B cell (primary cell): ENCODE measurements at regions of chr1 and their contacts with region 1.

Region 1: DNA sequence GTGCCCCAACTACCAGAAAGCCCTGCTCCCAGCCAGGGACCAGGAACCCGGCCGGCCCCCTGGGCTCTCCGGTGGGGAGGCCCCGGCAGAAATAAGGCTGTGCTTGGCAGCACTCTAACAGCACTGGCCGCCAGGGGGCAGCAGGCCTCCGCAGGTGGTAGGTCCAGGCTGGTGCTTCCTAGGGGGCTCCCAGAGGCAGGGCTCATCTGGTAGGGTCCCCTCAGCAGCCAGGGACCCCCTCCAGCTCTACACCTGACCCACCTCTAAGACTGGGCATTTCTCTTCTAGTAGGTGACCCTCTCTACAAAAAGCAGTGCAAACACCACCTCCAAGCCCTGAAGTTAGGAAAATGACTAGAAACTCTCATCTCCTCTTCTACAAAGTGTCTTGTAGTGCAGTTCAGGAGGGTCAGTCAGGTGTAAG is 85.6 kb downstream of the STUM start:
- DNase-seq: peak; percentile 88
- ATAC-seq: peak; percentile 76
- H3K4me3 ChIP-seq: no peak overlapping the region
- H3K4me3 Mint-ChIP-seq: peak overlapping the region; percentile 2
- H3K27ac ChIP-seq: peak overlapping the region; percentile 70 to 77
- H3K27ac Mint-ChIP-seq: peak overlapping the region; percentile 43
- H3K4me1 ChIP-seq: peaks cover 37 to 61% of the 10 kb centered on the region in 2 donors
- H3K4me1 Mint-ChIP-seq: peaks cover 58% of the 10 kb centered on the region
- H3K27me3 ChIP-seq: no peaks in the 10 kb centered on the region
- H3K27me3 Mint-ChIP-seq: no peaks in the 10 kb centered on the region
- CTCF ChIP-seq: peak; percentile 98

Region 2: DNA sequence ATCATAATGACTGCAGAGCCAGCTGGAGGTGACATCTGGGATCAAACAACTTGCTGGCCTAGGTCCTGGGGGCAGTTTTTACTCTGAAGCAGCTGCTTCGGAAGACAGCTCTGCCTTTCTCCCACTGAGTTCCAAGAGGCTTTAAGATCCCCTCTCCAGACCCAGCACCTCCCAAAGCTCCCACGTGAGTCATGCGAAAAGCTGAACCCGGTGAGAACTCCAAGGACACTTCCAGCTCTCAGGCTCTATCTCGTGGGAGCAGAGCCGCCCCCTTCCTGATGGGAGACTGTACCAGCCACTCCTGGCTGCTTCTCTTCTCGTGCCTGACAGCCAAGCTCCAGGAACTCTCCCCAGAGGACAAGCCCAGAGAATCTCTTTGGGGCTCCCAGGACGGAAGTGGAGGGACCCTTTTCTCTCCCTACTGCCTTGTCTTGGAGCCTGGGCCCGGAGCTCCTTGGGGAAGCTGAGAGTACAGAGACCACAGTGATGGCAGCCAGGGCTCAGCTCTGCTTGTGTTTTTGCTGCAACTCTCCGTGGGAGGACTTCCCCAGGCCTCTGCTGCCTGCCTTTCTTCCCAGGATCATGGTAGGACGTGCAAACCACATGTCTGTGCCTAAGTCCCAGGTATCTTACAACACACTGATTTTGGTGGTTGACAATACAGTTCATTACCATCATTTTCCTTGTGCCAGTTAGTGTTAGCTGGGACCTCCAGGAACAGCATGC is 45.0 kb before region 1 on chr1:
- CTCF ChIA-PET with region 1: no interaction called
- POLR2A ChIA-PET with region 1: no interaction called
- intact Hi-C with region 1: no loop called
- DNase-seq: no peak
- ATAC-seq: no peak
- H3K4me3 ChIP-seq: no peak overlapping the region
- H3K4me3 Mint-ChIP-seq: no peak overlapping the region
- H3K27ac ChIP-seq: no peak overlapping the region
- H3K27ac Mint-ChIP-seq: no peak overlapping the region
- H3K4me1 ChIP-seq: no peaks in the 10 kb centered on the region
- H3K4me1 Mint-ChIP-seq: no peaks in the 10 kb centered on the region
- H3K27me3 ChIP-seq: peaks cover 0 to 3% (median 0%) of the 10 kb centered on the region in 4 experiments
- H3K27me3 Mint-ChIP-seq: peaks cover 13% of the 10 kb centered on the region
- CTCF ChIP-seq: no peak

Region 3: DNA sequence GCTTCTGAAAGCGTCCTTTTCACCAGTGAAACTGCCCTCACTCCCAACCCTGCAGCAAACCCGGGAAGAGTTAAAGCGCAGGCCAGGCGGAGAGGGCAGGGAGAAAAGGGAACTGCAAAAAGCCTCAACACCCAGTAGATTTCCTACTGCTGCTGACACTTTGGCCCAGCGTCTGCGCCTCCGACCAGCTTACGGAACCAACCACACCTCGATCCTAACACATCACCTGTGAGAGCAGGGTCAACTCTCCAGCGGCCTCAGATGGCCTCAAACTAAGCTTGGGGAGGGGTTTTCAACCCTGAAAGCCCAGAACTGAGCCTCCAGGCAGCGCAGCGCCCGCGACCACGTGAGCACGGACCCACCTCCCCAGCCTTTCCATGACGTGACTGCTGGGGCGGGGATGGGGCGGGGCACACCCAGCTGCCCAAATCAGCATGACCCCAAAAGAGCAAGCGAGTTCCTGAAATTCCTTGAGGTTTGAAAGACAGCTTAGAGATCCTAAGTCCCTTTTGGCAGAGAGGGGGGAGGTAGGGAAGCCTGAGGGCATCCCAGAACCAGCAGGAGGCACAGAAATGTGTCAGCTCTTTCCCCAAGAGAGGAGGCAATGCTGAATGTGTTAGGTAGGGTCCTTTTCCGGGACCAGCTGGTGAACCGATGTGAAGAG is 45.8 kb after region 1 on chr1:
- CTCF ChIA-PET with region 1: interaction called, 23 read pairs
- POLR2A ChIA-PET with region 1: interaction called, 4 read pairs
- intact Hi-C with region 1: loop called (anchors 2 kb)
- DNase-seq: peak; percentile 90
- ATAC-seq: peak; percentile 48
- H3K4me3 ChIP-seq: peak overlapping the region; percentile 19 to 63 (median 55)
- H3K4me3 Mint-ChIP-seq: peak overlapping the region; percentile 83
- H3K27ac ChIP-seq: peak overlapping the region; percentile 88 to 94
- H3K27ac Mint-ChIP-seq: peak overlapping the region; percentile 96
- H3K4me1 ChIP-seq: peaks cover 94 to 99% of the 10 kb centered on the region in 2 donors
- H3K4me1 Mint-ChIP-seq: peaks cover 98% of the 10 kb centered on the region
- H3K27me3 ChIP-seq: no peaks in the 10 kb centered on the region
- H3K27me3 Mint-ChIP-seq: no peaks in the 10 kb centered on the region
- CTCF ChIP-seq: no peak

Region 4: GRCh38 chr1:226697151-226697939 is 63.2 kb after region 1 on chr1:
- CTCF ChIA-PET with region 1: interaction called, 22 read pairs
- POLR2A ChIA-PET with region 1: no interaction called
- intact Hi-C with region 1: no loop called
- DNase-seq: peak; percentile 88
- ATAC-seq: peak; percentile 83
- H3K4me3 ChIP-seq: peak overlapping the region in 1 of 5 experiments; percentile 4
- H3K4me3 Mint-ChIP-seq: peak overlapping the region; percentile 75
- H3K27ac ChIP-seq: peak overlapping the region; percentile 93 to 94
- H3K27ac Mint-ChIP-seq: peak overlapping the region; percentile 95
- H3K4me1 ChIP-seq: peaks cover 86 to 93% of the 10 kb centered on the region in 2 donors
- H3K4me1 Mint-ChIP-seq: peaks cover 89% of the 10 kb centered on the region
- H3K27me3 ChIP-seq: no peaks in the 10 kb centered on the region
- H3K27me3 Mint-ChIP-seq: no peaks in the 10 kb centered on the region
- CTCF ChIP-seq: no peak

Region 5: GRCh38 chr1:226736908-226737818 is 103.0 kb after region 1 on chr1:
- CTCF ChIA-PET with region 1: interaction called, 15 read pairs
- POLR2A ChIA-PET with region 1: interaction called, 3 read pairs
- intact Hi-C with region 1: loop called (anchors 1 kb)
- DNase-seq: peak; percentile 81
- ATAC-seq: peak; percentile 46
- H3K4me3 ChIP-seq: peak overlapping the region; percentile 82 to 97 (median 87)
- H3K4me3 Mint-ChIP-seq: peak overlapping the region; percentile 90
- H3K27ac ChIP-seq: peak overlapping the region in 1 of 2 donors; percentile 78
- H3K27ac Mint-ChIP-seq: no peak overlapping the region
- H3K4me1 ChIP-seq: peaks cover 67 to 70% of the 10 kb centered on the region in 2 donors
- H3K4me1 Mint-ChIP-seq: peaks cover 66% of the 10 kb centered on the region
- H3K27me3 ChIP-seq: no peaks in the 10 kb centered on the region
- H3K27me3 Mint-ChIP-seq: no peaks in the 10 kb centered on the region
- CTCF ChIP-seq: peak; percentile 33

Region 6: GRCh38 chr1:227734856-227735538 is 1100.8 kb after region 1 on chr1 and contains the starts of genes JMJD4 and SNAP47:
- CTCF ChIA-PET with region 1: no interaction called
- POLR2A ChIA-PET with region 1: no interaction called
- intact Hi-C with region 1: loop called (anchors 5 kb)
- DNase-seq: peak; percentile 95
- ATAC-seq: peak; percentile 91
- H3K4me3 ChIP-seq: peak within 1 kb of the TSS; percentile 58 to 96 (median 83)
- H3K4me3 Mint-ChIP-seq: peak within 1 kb of the TSS; percentile 91
- H3K27ac ChIP-seq: peak within 1 kb of the TSS; percentile 55 to 90
- H3K27ac Mint-ChIP-seq: peak within 1 kb of the TSS; percentile 87
- H3K4me1 ChIP-seq: peaks cover 12 to 23% of the 10 kb centered on the region in 2 donors
- H3K4me1 Mint-ChIP-seq: peaks cover 36% of the 10 kb centered on the region
- H3K27me3 ChIP-seq: no peaks in the 10 kb centered on the region
- H3K27me3 Mint-ChIP-seq: no peaks in the 10 kb centered on the region
- CTCF ChIP-seq: no peak
- total RNA-seq, gene JMJD4: 30.6 and 30.7 TPM in 2 replicates
- total RNA-seq, gene SNAP47: 34.3 and 34.9 TPM in 2 replicates